Activated B cell treated with CpG ODN at 0.5 μM for 24 hours (primary cell): ENCODE measurements at regions of chr9 and their contacts with region 1.

Region 1: DNA sequence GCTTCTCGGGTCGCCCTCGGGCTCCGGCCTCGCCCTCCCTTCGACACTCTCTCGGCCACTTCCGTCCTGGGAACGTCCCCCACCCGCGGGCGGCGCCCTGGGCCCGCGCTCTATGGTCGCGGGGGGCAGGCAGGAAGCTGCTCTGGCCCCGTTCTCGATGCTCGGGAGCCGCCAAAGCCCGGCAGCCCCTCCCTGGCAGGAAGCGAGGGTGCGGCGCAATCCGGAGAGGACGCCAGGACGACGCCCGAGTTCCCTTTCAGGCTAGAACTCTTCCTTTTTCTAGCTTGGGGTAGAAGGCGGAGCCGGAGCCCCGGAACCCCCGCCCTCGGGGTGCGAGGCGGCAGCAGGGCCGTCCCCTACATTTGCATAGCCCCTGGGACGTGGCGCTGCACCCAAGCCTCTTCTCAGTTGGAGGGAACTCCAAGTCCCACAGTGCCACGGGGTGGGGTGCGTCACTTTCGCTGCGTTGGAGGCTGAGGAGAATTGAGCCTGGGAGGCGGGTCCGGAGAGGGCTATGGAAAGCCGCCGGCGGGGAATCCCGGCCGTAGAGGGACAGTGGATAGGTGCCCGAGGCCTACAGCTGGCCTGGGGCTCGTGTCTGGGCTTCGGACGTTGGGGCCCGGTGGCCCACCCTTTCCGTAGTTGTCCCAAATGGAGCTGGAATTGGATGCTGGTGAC is at the starts of genes CREB3 and TLN1:
- DNase-seq: peak; percentile 94
- ATAC-seq: peak; percentile 86
- H3K4me3 Mint-ChIP-seq: peak within 1 kb of the TSS; percentile 32
- H3K27ac Mint-ChIP-seq: peak within 1 kb of the TSS; percentile 93
- H3K4me1 Mint-ChIP-seq: peaks cover 9% of the 10 kb centered on the region
- H3K27me3 Mint-ChIP-seq: no peaks in the 10 kb centered on the region
- CTCF ChIP-seq: no peak
- total RNA-seq, gene CREB3: 13.8 and 16.9 TPM in 2 replicates
- total RNA-seq, gene TLN1: 327 and 362 TPM in 2 replicates

Region 2: GRCh38 chr9:34665381-34666250 is 1066.6 kb before region 1 on chr9:
- CTCF ChIA-PET with region 1: no interaction called
- POLR2A ChIA-PET with region 1: no interaction called
- intact Hi-C with region 1: loop called (anchors 10 kb)
- DNase-seq: peak; percentile 75
- ATAC-seq: peak; percentile 90
- H3K4me3 Mint-ChIP-seq: peak overlapping the region; percentile 88
- H3K27ac Mint-ChIP-seq: peak overlapping the region; percentile 87
- H3K4me1 Mint-ChIP-seq: peaks cover 11% of the 10 kb centered on the region
- H3K27me3 Mint-ChIP-seq: no peaks in the 10 kb centered on the region
- CTCF ChIP-seq: no peak

Region 3: GRCh38 chr9:35102926-35103659 is 629.2 kb before region 1 on chr9 and contains the start of gene STOML2:
- CTCF ChIA-PET with region 1: no interaction called
- POLR2A ChIA-PET with region 1: no interaction called
- intact Hi-C with region 1: loop called (anchors 1 kb)
- DNase-seq: peak; percentile 82
- ATAC-seq: peak; percentile 97
- H3K4me3 Mint-ChIP-seq: peak within 1 kb of the TSS; percentile 97
- H3K27ac Mint-ChIP-seq: peak within 1 kb of the TSS; percentile 97
- H3K4me1 Mint-ChIP-seq: peaks cover 25% of the 10 kb centered on the region
- H3K27me3 Mint-ChIP-seq: no peaks in the 10 kb centered on the region
- CTCF ChIP-seq: no peak
- total RNA-seq, gene STOML2: 108 and 113 TPM in 2 replicates

Region 4: GRCh38 chr9:35611230-35611797 is 120.9 kb before region 1 on chr9:
- CTCF ChIA-PET with region 1: interaction called, 15 read pairs
- POLR2A ChIA-PET with region 1: interaction called, 27 read pairs
- intact Hi-C with region 1: no loop called
- DNase-seq: no peak
- ATAC-seq: peak; percentile 94
- H3K4me3 Mint-ChIP-seq: no peak overlapping the region
- H3K27ac Mint-ChIP-seq: peak overlapping the region; percentile 54
- H3K4me1 Mint-ChIP-seq: peaks cover 66% of the 10 kb centered on the region
- H3K27me3 Mint-ChIP-seq: no peaks in the 10 kb centered on the region
- CTCF ChIP-seq: no peak

Region 5: GRCh38 chr9:35657546-35658136 is 74.6 kb before region 1 on chr9 and contains the start of gene RMRP:
- CTCF ChIA-PET with region 1: interaction called, 9 read pairs
- POLR2A ChIA-PET with region 1: interaction called, 37 read pairs
- intact Hi-C with region 1: loop called (anchors 1 kb)
- DNase-seq: peak; percentile 81
- ATAC-seq: peak; percentile 81
- H3K4me3 Mint-ChIP-seq: peak within 1 kb of the TSS; percentile 88
- H3K27ac Mint-ChIP-seq: peak within 1 kb of the TSS; percentile 99
- H3K4me1 Mint-ChIP-seq: peaks cover 78% of the 10 kb centered on the region
- H3K27me3 Mint-ChIP-seq: peaks cover 5% of the 10 kb centered on the region
- CTCF ChIP-seq: no peak
- total RNA-seq, gene RMRP: 8,247 and 9,516 TPM in 2 replicates

Region 6: DNA sequence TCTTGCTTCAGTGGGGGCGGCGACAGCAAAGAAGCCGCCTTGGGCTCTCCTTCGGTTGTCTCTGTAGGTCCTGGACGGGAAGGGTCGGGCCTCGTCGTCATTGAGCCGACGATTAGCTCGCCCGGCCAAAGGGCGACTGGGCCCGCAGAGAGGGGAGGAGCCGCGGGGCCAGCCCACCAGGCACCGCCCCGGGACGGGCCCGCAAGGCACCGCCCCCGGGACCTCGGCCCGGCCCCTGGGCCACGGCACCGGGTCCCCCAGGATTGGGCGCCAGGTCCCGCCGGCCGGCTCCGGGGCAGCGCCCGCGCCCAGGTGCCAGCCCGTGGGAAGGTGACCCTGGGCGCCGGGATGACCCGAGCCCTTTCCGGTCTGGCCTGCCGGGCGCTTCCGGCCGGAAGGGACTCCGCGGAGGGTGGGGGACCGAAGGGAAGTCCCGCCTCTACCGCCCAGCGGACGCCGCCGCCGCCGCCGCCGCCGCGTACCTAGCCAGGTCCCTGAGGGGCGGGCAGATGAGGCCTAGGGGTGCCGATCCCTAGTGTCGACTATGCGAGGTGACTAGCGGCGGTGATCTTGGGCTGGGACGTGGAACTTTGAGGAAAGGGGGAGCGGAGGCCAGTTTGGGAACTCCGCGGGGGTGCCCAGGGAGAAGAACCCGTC is 16.7 kb after region 1 on chr9 and contains the starts of genes GBA2 and RGP1:
- CTCF ChIA-PET with region 1: interaction called, 51 read pairs
- POLR2A ChIA-PET with region 1: interaction called, 67 read pairs
- intact Hi-C with region 1: loop called (anchors 1 kb)
- DNase-seq: peak; percentile 84
- ATAC-seq: peak; percentile 84
- H3K4me3 Mint-ChIP-seq: peak within 1 kb of the TSS; percentile 93
- H3K27ac Mint-ChIP-seq: peak within 1 kb of the TSS; percentile 88
- H3K4me1 Mint-ChIP-seq: peaks cover 44% of the 10 kb centered on the region
- H3K27me3 Mint-ChIP-seq: no peaks in the 10 kb centered on the region
- CTCF ChIP-seq: no peak
- total RNA-seq, gene GBA2: 93.4 and 104 TPM in 2 replicates
- total RNA-seq, gene RGP1: 23.8 and 25.4 TPM in 2 replicates

Region 7: DNA sequence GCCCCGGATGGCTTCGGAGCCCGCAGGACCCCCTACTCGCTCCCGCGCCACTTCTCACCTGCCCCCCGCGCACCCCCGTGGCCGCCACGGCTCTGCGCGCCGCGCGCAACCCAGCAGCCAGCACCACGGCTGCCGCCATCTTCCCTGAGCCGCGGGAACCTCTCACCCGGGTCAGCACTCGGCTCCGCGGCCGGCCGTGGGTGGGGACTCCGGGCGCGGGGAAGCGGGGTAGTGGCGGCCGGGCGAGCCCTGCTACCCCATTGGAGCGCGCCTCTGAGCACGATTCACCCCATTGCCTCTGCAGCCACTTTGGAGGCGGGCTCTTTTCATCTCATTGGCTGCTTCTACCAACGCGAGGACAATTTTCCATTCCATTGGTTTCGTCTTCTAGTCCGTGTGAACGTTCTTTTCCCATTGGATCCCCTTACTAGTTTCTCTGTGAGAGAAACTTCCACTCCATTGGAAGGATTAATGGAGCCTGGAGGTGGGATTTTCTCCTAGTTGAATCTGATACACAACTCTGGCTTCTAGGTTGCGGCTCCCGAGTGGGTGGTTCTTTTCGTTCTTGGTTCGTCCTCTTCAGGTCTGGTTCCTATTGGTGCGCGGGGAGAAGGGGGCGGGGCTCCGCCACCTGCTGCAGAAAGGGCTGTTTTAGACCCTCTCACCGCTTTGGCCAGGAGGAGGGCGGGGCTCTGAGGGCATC is 82.7 kb after region 1 on chr9 and contains the start of gene HINT2:
- CTCF ChIA-PET with region 1: no interaction called
- POLR2A ChIA-PET with region 1: interaction called, 14 read pairs
- intact Hi-C with region 1: loop called (anchors 1 kb)
- DNase-seq: peak; percentile 90
- ATAC-seq: peak; percentile 83
- H3K4me3 Mint-ChIP-seq: peak within 1 kb of the TSS; percentile 98
- H3K27ac Mint-ChIP-seq: peak within 1 kb of the TSS; percentile 99
- H3K4me1 Mint-ChIP-seq: peaks cover 36% of the 10 kb centered on the region
- H3K27me3 Mint-ChIP-seq: no peaks in the 10 kb centered on the region
- CTCF ChIP-seq: no peak
- total RNA-seq, gene HINT2: 27.9 and 34.0 TPM in 2 replicates